ENCODE measurements at regions of chr11 and their contacts with region 1.

Region 1: GRCh38 chr11:118051611-118052461 is 25.0 kb upstream of the TMPRSS4 start:
- DNase-seq: peak; percentile 65
- H3K4me3 Mint-ChIP-seq: peak overlapping the region; percentile 5
- H3K27ac Mint-ChIP-seq: peak overlapping the region; percentile 94
- H3K4me1 Mint-ChIP-seq: peaks cover 54% of the 10 kb centered on the region
- H3K27me3 Mint-ChIP-seq: no peaks in the 10 kb centered on the region

Region 2: GRCh38 chr11:117807482-117808327 is 244.1 kb before region 1 on chr11:
- intact Hi-C with region 1: loop called (anchors 1 kb)
- DNase-seq: peak; percentile 54
- H3K4me3 Mint-ChIP-seq: no peak overlapping the region
- H3K27ac Mint-ChIP-seq: no peak overlapping the region
- H3K4me1 Mint-ChIP-seq: peaks cover 8% of the 10 kb centered on the region
- H3K27me3 Mint-ChIP-seq: peaks cover 10% of the 10 kb centered on the region

Region 3: DNA sequence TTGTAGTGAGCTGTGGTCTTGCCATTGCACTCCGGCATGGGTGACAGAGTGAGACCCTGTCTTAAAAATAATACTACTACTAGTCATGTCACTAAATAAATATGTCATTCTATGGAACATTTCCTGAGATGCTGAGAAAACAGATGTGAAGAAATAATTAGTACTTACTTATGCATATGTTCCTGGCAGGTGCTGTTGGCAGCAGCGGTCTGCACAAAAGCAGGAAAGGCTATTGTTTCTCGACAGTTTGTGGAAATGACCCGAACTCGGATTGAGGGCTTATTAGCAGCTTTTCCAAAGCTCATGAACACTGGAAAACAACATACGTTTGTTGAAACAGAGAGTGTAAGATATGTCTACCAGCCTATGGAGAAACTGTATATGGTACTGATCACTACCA is 529.2 kb after region 1 on chr11:
- intact Hi-C with region 1: no loop called
- DNase-seq: no peak
- H3K4me3 Mint-ChIP-seq: no peak overlapping the region
- H3K27ac Mint-ChIP-seq: no peak overlapping the region
- H3K4me1 Mint-ChIP-seq: peaks cover under 1% of the 10 kb centered on the region
- H3K27me3 Mint-ChIP-seq: no peaks in the 10 kb centered on the region

Measured in activated T-helper 2 cell treated with anti-CD3 and anti-CD28 coated beads, Interferon-gamma antibody, Interleukin-2, Interleukin-4, amounts not matched to agents 10 μg/mL and 5 μg/mL and 100 μg/mL, durations not matched to agents 14 hours and 24 hours and 36 hours (primary cell).